HEK293 (cell line): ENCODE measurements at regions of chr18 and their contacts with region 1.

Region 1: DNA sequence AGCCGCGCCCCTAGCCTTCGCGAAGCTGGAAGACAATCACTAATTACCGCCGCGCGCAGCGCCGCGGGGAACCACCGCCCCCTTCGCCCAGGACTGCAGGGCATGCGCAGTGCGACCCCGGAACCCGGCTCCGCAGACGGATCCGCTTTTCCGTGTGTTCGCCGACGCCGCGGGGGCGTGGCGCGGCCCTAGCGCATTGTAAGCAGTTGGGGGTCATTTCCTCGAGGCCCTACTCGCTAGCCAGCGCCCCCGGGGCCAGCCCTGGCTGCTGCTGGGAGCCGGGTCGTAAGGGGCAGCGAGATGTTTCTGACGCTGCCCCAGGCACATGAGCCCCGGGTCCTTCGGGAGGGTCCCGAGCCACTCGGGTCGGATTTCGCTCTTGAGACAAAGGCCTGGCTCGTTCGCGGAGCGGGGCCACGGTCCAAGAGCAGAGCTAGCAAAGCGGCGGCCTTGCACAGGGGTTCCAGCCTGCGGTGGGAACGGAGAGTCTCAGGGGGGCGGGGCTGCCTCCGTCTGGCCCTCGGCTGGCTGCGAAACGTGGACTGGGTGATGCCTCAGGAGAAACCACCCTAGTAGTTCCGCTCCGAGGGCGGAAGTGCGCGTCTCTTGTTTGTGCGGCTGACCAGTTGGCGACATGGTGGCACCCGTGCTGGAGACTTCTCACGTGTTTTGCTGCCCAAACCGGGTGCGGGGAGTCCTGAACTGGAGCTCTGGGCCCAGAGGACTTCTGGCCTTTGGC is at the starts of genes ELP2 and SLC39A6:
- H3K4me3 ChIP-seq: peak within 1 kb of the TSS; percentile 62
- H3K27ac ChIP-seq: peak within 1 kb of the TSS; percentile 90
- H3K4me1 ChIP-seq: no peaks in the 10 kb centered on the region; the same call in 1 of the 2 replicates
- CTCF ChIP-seq: peak; percentile 44; the same call in 1 of the 2 replicates

Region 2: DNA sequence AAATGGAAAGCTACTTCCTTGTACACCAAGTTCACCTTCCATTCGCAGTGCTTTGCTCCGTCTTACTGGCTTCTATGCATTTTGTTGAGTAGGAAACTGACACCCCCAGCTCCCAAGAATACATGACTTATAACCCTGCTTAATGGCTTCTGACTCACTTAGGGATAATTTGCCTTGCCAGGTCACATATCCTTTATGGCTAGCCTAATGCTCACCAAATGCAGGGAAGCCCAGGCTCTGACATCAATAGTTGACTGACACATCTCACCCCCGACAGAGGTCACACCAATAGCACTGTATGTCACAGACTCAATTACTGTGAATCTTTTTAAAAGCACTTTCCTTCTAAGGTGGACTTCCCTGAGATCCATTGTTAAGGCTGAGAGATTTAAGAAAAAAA is 1272.1 kb before region 1 on chr18:
- CTCF ChIA-PET with region 1: no interaction called
- POLR2A ChIA-PET with region 1: no interaction called
- H3K4me3 ChIP-seq: no peak overlapping the region
- H3K27ac ChIP-seq: no peak overlapping the region
- H3K4me1 ChIP-seq: no peaks in the 10 kb centered on the region
- CTCF ChIP-seq: no peak

Region 3: DNA sequence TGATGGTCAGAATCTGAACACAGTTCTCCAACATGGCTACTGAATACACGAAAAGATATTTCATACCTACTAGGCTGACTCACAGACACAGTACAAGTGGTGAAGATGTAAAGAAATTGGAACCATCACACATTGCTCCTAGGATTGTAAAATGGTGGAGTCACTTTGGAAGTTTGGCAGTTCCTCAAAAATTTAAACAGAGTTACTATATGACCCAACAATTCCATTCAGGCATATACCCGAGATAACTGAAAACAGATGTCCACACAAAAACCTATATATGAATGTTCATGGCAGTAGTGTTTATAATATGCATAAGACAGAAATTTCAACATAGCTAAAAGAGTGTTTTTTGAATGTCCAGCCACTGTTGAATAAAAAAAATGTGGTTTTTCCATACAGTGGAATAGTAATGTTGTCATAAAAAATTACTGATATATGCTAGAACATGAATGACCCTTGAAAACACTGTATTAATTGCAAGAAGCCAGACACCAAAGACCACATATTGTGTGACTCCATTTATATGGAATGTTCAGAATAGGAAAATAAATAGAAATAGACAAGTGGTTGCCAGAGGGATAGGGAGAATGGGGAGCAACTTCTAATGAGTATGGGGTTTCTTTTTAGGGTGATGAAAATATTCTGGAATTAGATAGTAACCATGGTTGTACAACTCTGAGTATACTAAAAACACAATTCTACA is 146.9 kb before region 1 on chr18:
- CTCF ChIA-PET with region 1: no interaction called
- POLR2A ChIA-PET with region 1: no interaction called
- H3K4me3 ChIP-seq: no peak overlapping the region
- H3K27ac ChIP-seq: no peak overlapping the region
- H3K4me1 ChIP-seq: no peaks in the 10 kb centered on the region
- CTCF ChIP-seq: no peak

Region 4: GRCh38 chr18:36095936-36096519 is 33.4 kb before region 1 on chr18:
- CTCF ChIA-PET with region 1: interaction called, 11 read pairs
- POLR2A ChIA-PET with region 1: interaction called, 6 read pairs
- H3K4me3 ChIP-seq: no peak overlapping the region
- H3K27ac ChIP-seq: no peak overlapping the region
- H3K4me1 ChIP-seq: no peaks in the 10 kb centered on the region
- CTCF ChIP-seq: peak; percentile 48; the same call in 1 of the 2 replicates

Region 5: DNA sequence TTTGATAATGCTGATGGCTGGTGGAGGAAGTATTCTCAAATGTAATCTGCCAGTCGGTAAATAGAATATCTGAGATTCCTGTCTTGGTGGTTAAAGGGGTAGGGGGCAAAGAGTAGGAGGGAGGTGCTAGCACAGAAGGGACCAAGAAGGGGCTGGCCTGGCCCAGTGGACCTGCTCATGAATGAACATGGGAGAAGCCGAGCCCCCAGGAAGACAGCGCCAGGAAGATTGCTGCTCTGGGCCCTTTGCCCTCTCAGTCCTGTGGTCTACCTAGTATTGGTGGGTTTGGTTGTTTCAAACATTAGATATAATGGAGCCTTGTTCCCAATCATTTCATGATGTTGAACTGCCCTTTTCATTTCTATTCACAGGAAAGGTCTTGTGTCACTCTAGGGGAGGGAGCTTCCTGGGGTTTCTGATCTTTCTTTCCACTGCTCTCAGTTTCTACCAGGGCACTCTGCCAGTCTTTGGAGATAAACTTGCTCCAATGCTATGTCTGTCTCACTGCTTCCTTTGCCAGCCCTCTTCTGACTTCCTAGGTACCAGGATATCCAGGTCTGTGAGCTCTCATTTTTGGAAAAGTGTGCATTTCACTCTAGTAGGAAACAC is 52.5 kb after region 1 on chr18:
- CTCF ChIA-PET with region 1: no interaction called
- POLR2A ChIA-PET with region 1: no interaction called
- H3K4me3 ChIP-seq: no peak overlapping the region
- H3K27ac ChIP-seq: no peak overlapping the region
- H3K4me1 ChIP-seq: no peaks in the 10 kb centered on the region
- CTCF ChIP-seq: no peak